ENCODE measurements at regions of chr3 and their contacts with region 1.

Region 1: GRCh38 chr3:60948484-60948883 is 302.8 kb downstream of the FHIT start:
- DNase-seq: no peak
- ATAC-seq: no peak
- H3K4me3 ChIP-seq: no peak overlapping the region
- H3K27ac ChIP-seq: no peak overlapping the region
- H3K4me1 ChIP-seq: no peaks in the 10 kb centered on the region
- H3K27me3 ChIP-seq: no peaks in the 10 kb centered on the region
- CTCF ChIP-seq: peak; percentile 18 to 45 (median 32); a peak in 4 of 6 replicates
- POLR2A ChIP-seq: no peak
- RAD21 ChIP-seq: peak; percentile 50; the same call in 1 of the 2 replicates

Region 2: GRCh38 chr3:60250206-60250605 is 698.3 kb before region 1 on chr3:
- CTCF ChIA-PET with region 1: no interaction called
- POLR2A ChIA-PET with region 1: no interaction called
- RAD21 ChIA-PET with region 1: no interaction called
- intact Hi-C with region 1: loop called (anchors 10 kb)
- DNase-seq: no peak
- ATAC-seq: no peak
- H3K4me3 ChIP-seq: no peak overlapping the region
- H3K27ac ChIP-seq: no peak overlapping the region
- H3K4me1 ChIP-seq: no peaks in the 10 kb centered on the region
- H3K27me3 ChIP-seq: no peaks in the 10 kb centered on the region
- CTCF ChIP-seq: no peak
- POLR2A ChIP-seq: no peak
- RAD21 ChIP-seq: no peak

Measured in HCT116 (cell line).